Spleen (tissue), 13 donors: ENCODE measurements at regions of chr1 and their contacts with region 1.

Region 1: GRCh38 chr1:109277434-109278204 is 5.3 kb downstream of the PSRC1 start:
- DNase-seq: peak; percentile 91
- H3K4me3 ChIP-seq: no peak overlapping the region
- H3K27ac ChIP-seq: peak overlapping the region in 1 of 8 donors; percentile 45
- H3K4me1 ChIP-seq: peaks cover 0 to 60% (median 20%) of the 10 kb centered on the region in 6 donors
- H3K27me3 ChIP-seq: peaks cover 0 to 15% (median 0%) of the 10 kb centered on the region in 7 donors
- CTCF ChIP-seq: peak; percentile 82 to 97 (median 92)
- POLR2A ChIP-seq: no peak

Region 2: GRCh38 chr1:109229531-109230127 is 48.0 kb before region 1 on chr1:
- intact Hi-C with region 1: no loop called
- DNase-seq: no peak
- H3K4me3 ChIP-seq: no peak overlapping the region
- H3K27ac ChIP-seq: no peak overlapping the region
- H3K4me1 ChIP-seq: peaks cover 0 to 16% (median 0%) of the 10 kb centered on the region in 6 donors
- H3K27me3 ChIP-seq: no peaks in the 10 kb centered on the region
- CTCF ChIP-seq: no peak
- POLR2A ChIP-seq: no peak

Region 3: GRCh38 chr1:109369167-109369746 is 91.6 kb after region 1 on chr1:
- intact Hi-C with region 1: no loop called
- DNase-seq: no peak
- H3K4me3 ChIP-seq: no peak overlapping the region
- H3K27ac ChIP-seq: peak overlapping the region in 5 of 8 donors; percentile 19 to 84 (median 66)
- H3K4me1 ChIP-seq: peaks cover 0 to 55% (median 17%) of the 10 kb centered on the region in 6 donors
- H3K27me3 ChIP-seq: peaks cover 0 to 5% (median 0%) of the 10 kb centered on the region in 7 donors
- CTCF ChIP-seq: no peak
- POLR2A ChIP-seq: no peak

Region 4: DNA sequence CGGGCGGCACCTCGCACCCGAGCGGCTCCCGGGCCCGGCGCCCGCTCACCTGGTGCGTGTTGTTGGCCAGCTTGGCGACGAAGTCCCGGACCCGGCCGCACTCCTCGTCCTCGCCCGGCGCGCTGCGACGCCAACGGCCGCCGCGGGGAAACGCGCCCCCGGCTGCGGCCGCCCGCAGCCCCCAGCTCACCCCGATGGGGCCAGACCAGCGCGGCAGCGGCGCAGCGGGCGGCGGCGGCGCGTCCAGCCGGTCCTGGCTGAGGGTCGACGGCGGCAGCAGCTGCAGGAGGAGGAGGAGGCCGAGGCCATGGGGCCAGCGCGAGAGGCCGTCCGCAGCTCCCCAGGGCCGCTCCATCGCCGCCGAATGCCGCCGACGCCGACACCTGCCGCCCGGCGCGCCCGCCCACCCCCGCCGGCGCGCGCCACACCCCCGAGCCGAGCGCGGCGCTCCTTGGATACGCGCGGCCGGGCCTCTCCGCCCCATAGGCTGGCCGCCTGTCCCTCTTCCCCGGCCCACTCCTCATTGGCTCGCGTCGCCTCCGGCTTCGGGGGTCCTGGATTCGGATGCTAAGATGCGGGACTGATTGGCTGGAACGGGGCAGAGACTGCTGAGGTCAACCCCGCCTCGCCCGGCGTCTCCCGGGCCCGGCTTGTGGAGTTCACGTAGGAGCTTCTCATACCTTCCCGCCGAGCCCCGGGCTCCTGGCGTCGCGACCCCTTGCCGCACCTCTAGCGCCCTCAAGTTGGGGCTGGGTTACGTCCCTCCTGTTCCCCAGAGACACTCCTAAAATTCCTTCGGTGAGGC is 120.1 kb after region 1 on chr1 and contains the start of gene SORT1:
- intact Hi-C with region 1: loop called (anchors 5 kb)
- DNase-seq: peak; percentile 92
- H3K4me3 ChIP-seq: peak within 1 kb of the TSS; percentile 22 to 80 (median 48)
- H3K27ac ChIP-seq: peak within 1 kb of the TSS in 7 of 8 donors; percentile 3 to 86 (median 72)
- H3K4me1 ChIP-seq: peaks cover 0 to 63% (median 40%) of the 10 kb centered on the region in 6 donors
- H3K27me3 ChIP-seq: peaks cover 0 to 49% (median 9%) of the 10 kb centered on the region in 7 donors
- CTCF ChIP-seq: no peak
- POLR2A ChIP-seq: no peak
- total RNA-seq, gene SORT1: 33.5 to 63.9 (median 43.6) TPM

Region 5: GRCh38 chr1:109548321-109549267 is 271.0 kb after region 1 on chr1 and contains the start of gene GNAI3:
- intact Hi-C with region 1: no loop called
- DNase-seq: peak; percentile 99
- H3K4me3 ChIP-seq: peak within 1 kb of the TSS; percentile 42 to 88 (median 77)
- H3K27ac ChIP-seq: peak within 1 kb of the TSS; percentile 96 to 99 (median 98)
- H3K4me1 ChIP-seq: peaks cover 34 to 76% (median 61%) of the 10 kb centered on the region in 6 donors
- H3K27me3 ChIP-seq: no peaks in the 10 kb centered on the region
- CTCF ChIP-seq: peak in 2 of 11 experiments; percentile 11 to 15
- POLR2A ChIP-seq: peak; percentile 75 to 95 (median 88)
- total RNA-seq, gene GNAI3: 7.4 to 11.4 (median 10.4) TPM